GM12878 (cell line): ENCODE measurements at regions of chr2 and their contacts with region 1.

Region 1: DNA sequence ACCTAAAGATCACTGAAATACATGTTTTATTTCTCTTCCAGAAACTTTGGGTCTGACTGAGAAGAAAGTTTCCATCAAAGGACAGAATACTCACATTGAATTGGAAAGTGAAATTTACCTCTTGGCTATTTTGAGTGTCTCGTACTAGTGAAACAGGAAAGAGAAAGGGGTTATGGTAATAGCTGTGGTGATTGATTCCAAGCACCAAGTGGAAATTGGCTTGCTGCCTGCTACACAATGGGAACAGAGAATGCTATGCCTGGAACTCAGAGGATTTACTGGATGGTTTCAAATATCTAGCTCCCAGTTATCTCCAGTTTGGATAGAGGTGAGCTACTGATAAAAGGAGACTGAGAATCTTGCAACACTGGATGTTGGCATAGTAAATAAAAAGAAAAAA is 492.8 kb upstream of the FSIP2 start:
- DNase-seq: no peak
- ATAC-seq: peak; percentile 36; the same call in 1 of the 3 replicates
- H3K4me3 ChIP-seq: no peak overlapping the region
- H3K27ac ChIP-seq: no peak overlapping the region
- H3K4me1 ChIP-seq: no peaks in the 10 kb centered on the region
- H3K27me3 ChIP-seq: no peaks in the 10 kb centered on the region
- CTCF ChIP-seq: no peak
- EP300 ChIP-seq: no peak
- POLR2A ChIP-seq: no peak
- RAD21 ChIP-seq: no peak

Region 2: GRCh38 chr2:185274718-185275484 is 29.1 kb after region 1 on chr2:
- CTCF ChIA-PET with region 1: interaction called, 12 read pairs
- POLR2A ChIA-PET with region 1: no interaction called
- RAD21 ChIA-PET with region 1: no interaction called
- SMC1A ChIA-PET with region 1: interaction called, 11 read pairs
- in situ Hi-C with region 1: no loop called
- intact Hi-C with region 1: no loop called
- DNase-seq: no peak
- ATAC-seq: peak; percentile 79
- H3K4me3 ChIP-seq: no peak overlapping the region
- H3K27ac ChIP-seq: no peak overlapping the region
- H3K4me1 ChIP-seq: no peaks in the 10 kb centered on the region
- H3K27me3 ChIP-seq: no peaks in the 10 kb centered on the region
- CTCF ChIP-seq: no peak
- EP300 ChIP-seq: no peak
- POLR2A ChIP-seq: no peak
- RAD21 ChIP-seq: no peak

Region 3: GRCh38 chr2:185880396-185880795 is 634.6 kb after region 1 on chr2:
- CTCF ChIA-PET with region 1: no interaction called
- POLR2A ChIA-PET with region 1: no interaction called
- RAD21 ChIA-PET with region 1: no interaction called
- SMC1A ChIA-PET with region 1: no interaction called
- in situ Hi-C with region 1: no loop called
- intact Hi-C with region 1: no loop called
- DNase-seq: no peak
- ATAC-seq: no peak
- H3K4me3 ChIP-seq: no peak overlapping the region
- H3K27ac ChIP-seq: no peak overlapping the region
- H3K4me1 ChIP-seq: no peaks in the 10 kb centered on the region
- H3K27me3 ChIP-seq: no peaks in the 10 kb centered on the region
- CTCF ChIP-seq: no peak
- EP300 ChIP-seq: no peak
- POLR2A ChIP-seq: no peak
- RAD21 ChIP-seq: no peak